ENCODE measurements at regions of chr12 and their contacts with region 1.

Region 1: GRCh38 chr12:109377139-109377685 is 29.5 kb downstream of the MYO1H start:
- DNase-seq: no peak
- H3K4me3 ChIP-seq: no peak overlapping the region
- H3K27ac ChIP-seq: no peak overlapping the region
- H3K4me1 ChIP-seq: no peaks in the 10 kb centered on the region
- H3K27me3 ChIP-seq: peaks cover 36% of the 10 kb centered on the region
- CTCF ChIP-seq: no peak

Region 2: GRCh38 chr12:109393437-109394345 is 16.5 kb after region 1 on chr12:
- CTCF ChIA-PET with region 1: no interaction called
- POLR2A ChIA-PET with region 1: interaction called, 12 read pairs
- intact Hi-C with region 1: no loop called
- DNase-seq: peak in 1 of 2 experiments; percentile 24
- H3K4me3 ChIP-seq: no peak overlapping the region
- H3K27ac ChIP-seq: no peak overlapping the region
- H3K4me1 ChIP-seq: no peaks in the 10 kb centered on the region
- H3K27me3 ChIP-seq: peaks cover 30% of the 10 kb centered on the region
- CTCF ChIP-seq: peak; percentile 85

Measured in PC-9 (cell line).